ENCODE measurements at regions of chr1 and their contacts with region 1.

Region 1: DNA sequence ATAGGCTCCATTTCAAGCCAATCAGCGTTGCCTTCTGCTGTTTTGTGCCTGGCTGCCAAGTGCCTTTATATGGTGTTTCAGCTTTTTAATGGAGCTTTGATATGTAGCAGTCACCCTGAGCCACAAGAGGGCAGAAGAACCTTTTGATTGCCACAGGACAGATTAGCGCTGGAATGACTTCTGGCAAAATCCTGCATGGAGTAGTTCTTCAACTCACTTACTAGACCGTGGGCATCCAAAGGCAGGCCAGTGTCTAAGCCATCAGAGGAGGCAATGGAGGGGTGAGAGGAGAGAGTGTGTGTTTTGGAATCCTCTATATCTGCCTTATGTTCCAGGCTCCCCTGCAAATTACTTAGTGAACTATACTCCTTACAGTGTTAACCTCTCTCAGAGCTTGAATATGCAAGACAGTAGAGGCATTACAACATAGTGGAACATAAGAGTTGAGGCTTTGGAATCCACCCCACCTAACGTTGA is 56.2 kb downstream of the ST3GAL3 start:
- DNase-seq: peak; percentile 87
- ATAC-seq: peak; percentile 98
- H3K4me3 ChIP-seq: no peak overlapping the region
- H3K27ac ChIP-seq: no peak overlapping the region
- H3K4me1 ChIP-seq: peaks cover 0 to 21% of the 10 kb centered on the region in 2 experiments; a peak in 3 of 4 replicates
- H3K27me3 ChIP-seq: no peaks in the 10 kb centered on the region
- CTCF ChIP-seq: peak; percentile 76 to 98 (median 91)
- POLR2A ChIP-seq: no peak
- RAD21 ChIP-seq: peak; percentile 100

Region 2: DNA sequence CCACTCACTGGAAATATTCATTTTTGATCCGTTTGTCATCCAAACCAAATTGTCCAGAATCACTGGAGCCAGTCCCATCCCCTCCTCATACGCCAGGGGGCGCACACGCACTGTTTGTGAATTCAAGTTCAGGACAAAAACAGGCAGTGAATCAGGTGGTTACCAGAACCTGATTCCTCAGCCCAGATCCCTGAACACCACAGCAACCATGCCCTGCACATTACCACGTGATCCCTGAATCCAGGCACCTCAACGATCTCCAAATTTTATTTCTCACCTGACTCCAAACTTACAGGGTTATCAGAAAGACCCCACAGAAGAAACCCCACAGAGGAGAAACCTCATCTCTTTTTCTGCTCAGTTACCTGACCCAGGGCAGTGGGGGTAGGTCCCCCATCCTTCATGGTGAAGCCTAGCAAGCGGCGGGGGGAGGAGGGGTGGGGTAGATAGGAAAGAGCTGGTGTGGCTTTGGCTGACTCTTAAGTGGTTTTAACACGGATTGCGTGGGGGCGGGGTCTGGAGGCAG is 234.3 kb before region 1 on chr1:
- CTCF ChIA-PET with region 1: interaction called, 5 read pairs
- POLR2A ChIA-PET with region 1: no interaction called
- RAD21 ChIA-PET with region 1: interaction called in 1 of 2 experiments, 4 read pairs
- intact Hi-C with region 1: loop called (anchors 5 kb)
- DNase-seq: peak; percentile 84
- ATAC-seq: peak; percentile 56
- H3K4me3 ChIP-seq: no peak overlapping the region
- H3K27ac ChIP-seq: no peak overlapping the region
- H3K4me1 ChIP-seq: peaks cover 26 to 71% of the 10 kb centered on the region in 2 experiments
- H3K27me3 ChIP-seq: no peaks in the 10 kb centered on the region
- CTCF ChIP-seq: peak in 2 of 3 experiments; percentile 94 to 97; a peak in 4 of 6 replicates
- POLR2A ChIP-seq: no peak
- RAD21 ChIP-seq: no peak

Region 3: DNA sequence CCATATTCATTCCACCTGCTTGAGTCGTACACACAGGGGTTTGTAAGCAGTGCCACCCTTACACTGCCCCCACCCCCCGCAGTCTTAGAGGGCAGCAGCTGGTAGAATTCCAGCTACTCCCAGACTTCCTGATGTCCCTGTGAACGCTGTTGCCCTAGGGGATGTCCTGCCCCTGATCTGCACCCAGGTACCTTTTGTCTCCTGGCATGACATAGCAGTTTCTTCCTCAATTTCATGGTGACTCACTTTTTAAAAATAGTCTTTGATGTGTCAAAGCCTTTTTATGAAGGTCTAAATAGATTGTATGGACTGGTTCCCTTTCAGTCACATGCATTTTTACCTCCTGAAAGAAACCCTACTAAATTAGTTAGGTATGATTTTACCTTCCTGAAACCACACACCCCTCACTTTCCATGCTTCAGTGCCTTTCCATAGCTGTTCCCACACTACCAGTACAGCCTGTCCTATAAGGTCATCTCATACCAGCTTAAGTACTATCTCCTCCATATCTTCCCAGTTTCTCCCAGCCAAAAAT is 20.2 kb after region 1 on chr1:
- CTCF ChIA-PET with region 1: interaction called, 11 read pairs
- POLR2A ChIA-PET with region 1: no interaction called
- RAD21 ChIA-PET with region 1: interaction called, 4 to 6 read pairs
- intact Hi-C with region 1: no loop called
- DNase-seq: peak; percentile 71
- ATAC-seq: peak; percentile 87
- H3K4me3 ChIP-seq: peak overlapping the region in 1 of 2 experiments; percentile 37; a peak in 3 of 4 replicates
- H3K27ac ChIP-seq: peak overlapping the region; percentile 59
- H3K4me1 ChIP-seq: peaks cover 23 to 54% of the 10 kb centered on the region in 2 experiments
- H3K27me3 ChIP-seq: no peaks in the 10 kb centered on the region
- CTCF ChIP-seq: no peak
- POLR2A ChIP-seq: no peak
- RAD21 ChIP-seq: peak; percentile 36

Region 4: DNA sequence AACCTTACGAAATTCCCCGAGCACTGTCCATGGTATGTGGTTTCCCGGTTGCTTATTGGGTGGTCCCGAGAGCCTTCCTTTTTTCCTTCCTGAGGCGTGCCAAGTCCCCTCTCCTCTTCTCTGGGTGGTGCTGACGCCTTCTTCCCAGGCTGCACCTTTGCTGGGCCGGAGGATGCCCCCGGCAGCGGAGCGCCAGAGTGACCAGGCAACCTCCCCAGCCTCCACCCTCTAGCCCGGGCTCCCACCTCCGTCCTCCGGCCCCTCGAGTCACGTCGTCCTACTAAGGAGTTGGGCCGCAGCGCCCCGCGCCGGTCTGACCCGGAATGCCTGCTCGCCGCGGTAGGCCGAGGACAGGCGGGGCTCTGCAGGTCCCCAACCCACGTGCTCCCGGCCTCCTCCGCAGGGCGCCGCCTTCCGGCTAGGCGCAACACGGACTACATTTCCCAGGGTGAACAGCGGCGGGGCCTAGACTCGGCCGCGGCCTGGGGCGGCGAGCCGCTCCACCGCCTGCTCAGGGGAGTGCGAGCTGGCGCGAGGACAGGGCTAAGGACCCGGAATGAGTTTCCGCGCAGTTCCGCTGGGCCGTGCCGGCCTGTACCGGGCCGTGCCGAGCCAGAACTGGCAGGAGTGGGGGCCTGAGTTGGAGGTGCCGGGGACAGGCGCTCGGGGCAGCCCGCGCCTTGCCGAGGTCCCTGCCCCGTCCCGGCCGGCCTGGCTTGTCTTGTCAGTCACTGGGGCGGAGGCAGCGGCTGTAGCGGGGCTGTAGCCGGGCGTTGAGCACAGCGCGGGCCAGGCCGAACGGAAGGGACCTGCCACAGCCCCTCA is 182.9 kb after region 1 on chr1 and contains the start of gene IPO13:
- CTCF ChIA-PET with region 1: interaction called, 24 read pairs
- POLR2A ChIA-PET with region 1: interaction called, 3 read pairs
- RAD21 ChIA-PET with region 1: interaction called in 1 of 2 experiments, 10 read pairs
- intact Hi-C with region 1: loop called (anchors 1 kb)
- DNase-seq: peak; percentile 93
- ATAC-seq: peak; percentile 95
- H3K4me3 ChIP-seq: peak within 1 kb of the TSS; percentile 77 to 97
- H3K27ac ChIP-seq: peak within 1 kb of the TSS; percentile 88
- H3K4me1 ChIP-seq: peaks cover 10 to 23% of the 10 kb centered on the region in 2 experiments; a peak in 3 of 4 replicates
- H3K27me3 ChIP-seq: no peaks in the 10 kb centered on the region
- CTCF ChIP-seq: peak; percentile 72 to 84 (median 76)
- POLR2A ChIP-seq: peak; percentile 53
- RAD21 ChIP-seq: peak; percentile 90
- total RNA-seq, gene IPO13: 18.7 TPM

Region 5: GRCh38 chr1:44002606-44003157 is 239.1 kb after region 1 on chr1:
- CTCF ChIA-PET with region 1: interaction called, 11 read pairs
- POLR2A ChIA-PET with region 1: no interaction called
- RAD21 ChIA-PET with region 1: no interaction called
- intact Hi-C with region 1: no loop called
- DNase-seq: no peak
- ATAC-seq: no peak
- H3K4me3 ChIP-seq: no peak overlapping the region
- H3K27ac ChIP-seq: no peak overlapping the region
- H3K4me1 ChIP-seq: peaks cover 0 to 4% of the 10 kb centered on the region in 2 experiments; a peak in 2 of 4 replicates
- H3K27me3 ChIP-seq: no peaks in the 10 kb centered on the region
- CTCF ChIP-seq: peak in 2 of 3 experiments; percentile 39 to 47; a peak in 4 of 6 replicates
- POLR2A ChIP-seq: no peak
- RAD21 ChIP-seq: no peak

Region 6: GRCh38 chr1:44036409-44037139 is 273.0 kb after region 1 on chr1:
- CTCF ChIA-PET with region 1: interaction called, 21 read pairs
- POLR2A ChIA-PET with region 1: no interaction called
- RAD21 ChIA-PET with region 1: no interaction called
- intact Hi-C with region 1: loop called (anchors 1 kb)
- DNase-seq: peak; percentile 64
- ATAC-seq: peak; percentile 91
- H3K4me3 ChIP-seq: no peak overlapping the region
- H3K27ac ChIP-seq: no peak overlapping the region; the same call in 1 of the 2 replicates
- H3K4me1 ChIP-seq: peaks cover 16 to 17% of the 10 kb centered on the region in 2 experiments
- H3K27me3 ChIP-seq: no peaks in the 10 kb centered on the region
- CTCF ChIP-seq: peak in 2 of 3 experiments; percentile 91 to 95; a peak in 4 of 6 replicates
- POLR2A ChIP-seq: no peak
- RAD21 ChIP-seq: no peak

Region 7: DNA sequence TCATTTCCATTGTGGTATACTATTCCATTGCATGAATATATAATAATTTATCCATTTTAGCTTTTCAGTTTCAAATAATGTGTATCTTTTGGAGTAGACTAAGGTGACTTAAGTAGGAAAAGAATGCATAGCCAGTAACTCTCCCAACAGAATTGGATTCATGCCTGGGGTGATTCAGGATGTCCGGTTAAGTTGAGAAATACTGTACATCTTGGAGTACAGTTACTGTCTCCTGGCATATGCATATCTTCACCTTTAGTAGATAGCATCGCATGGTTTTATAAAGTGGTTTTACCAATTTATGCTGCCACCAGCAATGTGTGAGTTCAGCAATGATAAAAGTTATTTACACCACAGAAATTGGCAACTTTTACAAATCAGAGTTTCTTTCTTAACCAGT is 286.3 kb after region 1 on chr1:
- CTCF ChIA-PET with region 1: interaction called, 18 read pairs
- POLR2A ChIA-PET with region 1: no interaction called
- RAD21 ChIA-PET with region 1: interaction called, 3 to 6 read pairs
- intact Hi-C with region 1: no loop called
- DNase-seq: no peak
- ATAC-seq: no peak
- H3K4me3 ChIP-seq: no peak overlapping the region
- H3K27ac ChIP-seq: no peak overlapping the region
- H3K4me1 ChIP-seq: peaks cover 2 to 7% of the 10 kb centered on the region in 2 experiments; a peak in 2 of 4 replicates
- H3K27me3 ChIP-seq: no peaks in the 10 kb centered on the region
- CTCF ChIP-seq: no peak
- POLR2A ChIP-seq: no peak
- RAD21 ChIP-seq: no peak

Measured in HCT116 (cell line).